ENCODE measurements at regions of chrX and their contacts with region 1.

Region 1: DNA sequence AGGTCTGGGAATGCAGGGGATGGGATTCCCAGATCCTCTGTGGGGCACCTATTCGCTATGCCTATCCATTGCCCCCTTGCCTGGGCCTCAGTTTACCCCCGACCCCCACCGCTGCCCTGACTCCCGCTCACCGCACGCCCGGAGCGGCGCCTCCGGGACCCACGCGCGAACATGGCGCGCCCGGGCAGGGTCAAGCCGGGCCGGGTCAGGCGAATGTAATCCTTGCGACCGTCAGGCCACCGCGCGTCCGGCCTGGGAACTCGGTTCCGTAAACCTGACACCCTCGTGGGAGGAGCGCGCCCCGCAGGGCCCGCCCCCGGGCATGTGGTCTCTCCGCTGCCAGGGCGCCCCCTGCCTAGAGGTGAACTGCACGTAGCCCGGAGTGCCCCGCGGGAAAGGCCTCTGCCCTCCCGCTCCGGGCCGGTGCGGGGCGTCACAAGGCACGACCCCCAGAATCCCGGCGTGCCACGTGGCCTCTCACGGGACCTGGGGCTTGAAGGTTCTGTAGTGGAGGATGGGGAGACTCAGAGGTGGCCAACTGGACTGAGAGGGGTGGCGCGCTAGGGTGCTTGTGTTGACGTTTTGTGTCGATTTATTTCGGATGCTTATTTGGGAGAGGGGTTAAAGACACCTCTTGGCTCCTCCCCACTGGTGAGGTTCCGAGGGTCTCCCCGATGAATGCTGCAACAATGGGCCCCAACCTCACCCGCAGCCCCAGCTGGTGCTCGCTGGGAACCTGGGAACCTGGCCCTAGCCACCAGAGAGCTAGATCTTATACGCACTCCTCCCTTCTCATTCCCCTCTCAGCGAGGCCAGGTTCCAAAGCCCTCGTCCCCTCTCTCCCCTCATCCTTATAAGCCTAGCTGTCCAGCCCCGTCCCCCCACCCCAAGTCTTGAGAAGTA is at the start of gene PRICKLE3:
- DNase-seq: peak; percentile 78 to 86
- ATAC-seq: peak; percentile 23 to 32
- H3K4me3 ChIP-seq: peak within 1 kb of the TSS; percentile 51 to 69 (median 61)
- H3K27ac ChIP-seq: peak within 1 kb of the TSS; percentile 83 to 93 (median 92)
- H3K4me1 ChIP-seq: peaks cover 8 to 12% of the 10 kb centered on the region in 2 donors
- H3K27me3 ChIP-seq: no peaks in the 10 kb centered on the region
- CTCF ChIP-seq: peak in 3 of 5 experiments; percentile 29 to 51 (median 38)
- POLR2A ChIP-seq: peak; percentile 80 to 82
- total RNA-seq, gene PRICKLE3: 9.1 to 33.1 (median 21.3) TPM

Region 2: GRCh38 chrX:49077941-49078340 is 108.4 kb before region 1 on chrX:
- in situ Hi-C with region 1: no loop called
- intact Hi-C with region 1: no loop called
- DNase-seq: no peak
- ATAC-seq: no peak
- H3K4me3 ChIP-seq: no peak overlapping the region
- H3K27ac ChIP-seq: peak overlapping the region in 3 of 4 donors; percentile 88 to 97 (median 95)
- H3K4me1 ChIP-seq: peaks cover 6 to 20% of the 10 kb centered on the region in 2 donors
- H3K27me3 ChIP-seq: no peaks in the 10 kb centered on the region
- CTCF ChIP-seq: no peak
- POLR2A ChIP-seq: no peak

Region 3: GRCh38 chrX:49089336-49089952 is 96.9 kb before region 1 on chrX:
- in situ Hi-C with region 1: no loop called
- intact Hi-C with region 1: no loop called
- DNase-seq: no peak
- ATAC-seq: no peak
- H3K4me3 ChIP-seq: no peak overlapping the region
- H3K27ac ChIP-seq: no peak overlapping the region
- H3K4me1 ChIP-seq: no peaks in the 10 kb centered on the region
- H3K27me3 ChIP-seq: no peaks in the 10 kb centered on the region
- CTCF ChIP-seq: no peak
- POLR2A ChIP-seq: no peak

Region 4: GRCh38 chrX:49155900-49156837 is 30.2 kb before region 1 on chrX:
- in situ Hi-C with region 1: no loop called
- intact Hi-C with region 1: loop called (anchors 1 kb)
- DNase-seq: peak; percentile 72 to 86
- ATAC-seq: peak; percentile 84 to 92
- H3K4me3 ChIP-seq: peak overlapping the region; percentile 60 to 69 (median 66)
- H3K27ac ChIP-seq: peak overlapping the region; percentile 89 to 96 (median 94)
- H3K4me1 ChIP-seq: peaks cover 0 to 4% of the 10 kb centered on the region in 2 donors
- H3K27me3 ChIP-seq: no peaks in the 10 kb centered on the region
- CTCF ChIP-seq: peak; percentile 57 to 85 (median 82)
- POLR2A ChIP-seq: peak; percentile 36 to 47

Region 5: DNA sequence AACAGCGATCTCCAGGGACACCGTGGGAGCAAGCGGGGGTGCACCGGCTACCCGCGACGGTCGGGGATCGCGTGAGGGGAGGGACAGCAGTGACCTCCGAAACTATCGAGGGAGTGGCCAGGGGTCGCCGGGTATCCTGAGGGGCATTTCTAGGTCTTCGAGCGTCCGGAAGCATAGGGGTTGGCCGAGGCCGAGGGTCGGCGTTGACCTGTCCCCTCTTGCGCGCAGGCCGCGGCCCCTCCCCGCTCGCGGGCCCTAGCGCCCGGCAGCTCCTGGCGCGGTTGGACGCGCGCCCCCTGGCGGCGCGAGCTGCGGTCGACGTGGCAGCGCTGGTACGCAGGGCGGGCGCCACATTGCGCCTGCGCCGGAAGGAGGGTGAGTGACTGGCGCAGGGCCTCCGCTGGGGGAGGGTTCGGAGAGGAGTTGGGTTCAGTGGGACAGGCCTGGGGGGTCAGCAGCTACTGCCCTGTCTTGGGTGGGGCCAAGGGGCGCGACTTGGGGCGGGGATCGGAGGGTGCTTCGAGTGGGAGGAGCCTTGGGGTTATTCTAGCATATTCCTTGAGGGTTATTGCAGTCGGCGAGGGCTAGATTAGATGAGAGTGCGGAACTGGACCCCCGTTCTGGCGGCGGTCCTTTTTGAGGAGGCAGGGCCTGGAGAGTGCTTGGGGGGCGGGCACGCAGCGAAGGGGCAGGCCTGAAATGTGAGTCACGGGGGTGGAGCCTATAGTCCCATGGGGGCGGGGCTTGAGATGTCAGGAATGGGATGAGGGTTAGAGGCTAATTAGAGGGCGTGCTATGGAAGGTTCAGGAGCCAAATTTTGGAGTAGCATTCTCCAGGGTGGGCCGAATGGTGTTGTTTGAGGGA is 22.6 kb before region 1 on chrX:
- in situ Hi-C with region 1: no loop called
- intact Hi-C with region 1: loop called (anchors 1 kb)
- DNase-seq: peak; percentile 76 to 87
- ATAC-seq: peak; percentile 49 to 60
- H3K4me3 ChIP-seq: peak overlapping the region; percentile 37 to 61 (median 51)
- H3K27ac ChIP-seq: peak overlapping the region; percentile 93 to 98 (median 95)
- H3K4me1 ChIP-seq: peaks cover 8 to 10% of the 10 kb centered on the region in 2 donors
- H3K27me3 ChIP-seq: no peaks in the 10 kb centered on the region
- CTCF ChIP-seq: peak; percentile 56 to 93 (median 86)
- POLR2A ChIP-seq: peak; percentile 58 to 59

Region 6: DNA sequence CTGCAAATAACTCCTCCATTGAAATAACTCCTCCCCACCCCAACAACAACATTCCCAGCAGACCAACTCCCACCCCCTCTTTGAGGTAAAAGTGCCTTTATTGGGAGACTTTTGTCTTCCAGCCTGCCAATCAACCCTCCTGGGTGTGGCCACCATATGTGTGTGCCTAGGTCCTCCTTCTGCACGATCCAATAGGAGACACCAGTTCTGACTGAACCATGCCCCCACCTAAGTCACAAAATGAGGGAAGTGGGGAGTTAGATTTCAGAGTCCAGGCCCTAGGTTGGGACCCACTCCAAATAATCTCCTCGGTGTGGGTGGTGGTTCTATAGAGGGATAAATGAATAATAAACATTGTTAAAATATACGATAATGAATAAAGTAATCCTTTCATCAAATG is 11.7 kb before region 1 on chrX:
- in situ Hi-C with region 1: no loop called
- intact Hi-C with region 1: no loop called
- DNase-seq: no peak
- ATAC-seq: no peak
- H3K4me3 ChIP-seq: no peak overlapping the region
- H3K27ac ChIP-seq: no peak overlapping the region
- H3K4me1 ChIP-seq: peaks cover 0 to 3% of the 10 kb centered on the region in 2 donors
- H3K27me3 ChIP-seq: no peaks in the 10 kb centered on the region
- CTCF ChIP-seq: no peak
- POLR2A ChIP-seq: no peak